Pancreas (tissue), 10 donors: ENCODE measurements at regions of chrX and their contacts with region 1.

Region 1: GRCh38 chrX:66544181-66544580 is 94.7 kb downstream of the EDA2R start:
- DNase-seq: no peak
- ATAC-seq: no peak
- H3K4me3 ChIP-seq: no peak overlapping the region
- H3K27ac ChIP-seq: no peak overlapping the region
- H3K4me1 ChIP-seq: no peaks in the 10 kb centered on the region
- H3K27me3 ChIP-seq: peaks cover 0 to 4% (median 0%) of the 10 kb centered on the region in 4 donors
- CTCF ChIP-seq: no peak

Region 2: DNA sequence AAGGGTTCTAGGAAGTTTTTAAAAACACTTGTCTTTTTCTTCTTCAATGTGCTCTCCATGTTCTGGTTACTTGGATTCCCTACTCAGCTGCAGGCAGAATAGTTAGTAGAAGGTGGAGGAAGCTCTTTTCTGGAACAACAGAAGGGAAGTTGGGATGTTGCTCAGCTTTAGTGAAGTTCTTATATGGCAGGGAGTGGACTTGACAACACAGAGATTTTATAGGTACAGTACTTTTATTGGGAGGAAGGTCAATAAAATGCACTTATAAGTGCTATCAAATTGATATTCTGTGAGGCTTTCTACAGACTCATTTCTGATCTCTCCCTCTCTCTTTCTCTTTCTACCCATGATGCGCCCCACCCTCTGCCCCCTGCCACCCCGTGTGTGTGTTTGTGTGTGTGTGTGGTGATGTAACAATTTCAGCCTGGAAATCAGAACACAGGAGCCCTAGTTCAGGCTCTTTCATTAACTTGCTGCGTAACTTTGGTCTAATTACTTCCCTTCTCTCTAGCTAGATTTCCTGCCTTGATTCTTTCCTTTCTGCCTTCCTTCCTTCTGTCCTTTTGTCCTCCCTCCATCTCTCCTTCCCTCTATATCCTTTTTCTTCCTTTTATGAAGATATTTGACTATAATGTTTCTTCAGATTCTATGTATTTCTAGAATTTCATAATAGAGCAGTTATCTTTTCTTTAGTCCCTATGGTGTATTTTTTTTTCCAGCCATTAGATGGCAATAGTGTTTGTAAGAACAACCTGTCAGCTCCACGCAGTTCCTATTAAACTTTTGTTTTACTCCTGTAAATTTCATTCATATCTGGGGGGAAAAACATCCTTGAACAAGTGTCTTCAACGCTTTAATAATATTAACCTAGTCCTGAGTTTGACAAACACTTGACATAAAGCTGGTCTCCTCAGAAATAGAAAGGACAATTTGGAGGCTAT is 343.1 kb before region 1 on chrX:
- intact Hi-C with region 1: no loop called
- DNase-seq: no peak
- ATAC-seq: no peak
- H3K4me3 ChIP-seq: no peak overlapping the region
- H3K27ac ChIP-seq: no peak overlapping the region
- H3K4me1 ChIP-seq: no peaks in the 10 kb centered on the region
- H3K27me3 ChIP-seq: peaks cover 0 to 26% (median 9%) of the 10 kb centered on the region in 4 donors
- CTCF ChIP-seq: peak in 1 of 4 donors; percentile 18

Region 3: GRCh38 chrX:66615655-66616054 is 71.5 kb after region 1 on chrX:
- intact Hi-C with region 1: loop called in 1 of 3 experiments (anchors 10 kb)
- DNase-seq: no peak
- ATAC-seq: no peak
- H3K4me3 ChIP-seq: no peak overlapping the region
- H3K27ac ChIP-seq: no peak overlapping the region
- H3K4me1 ChIP-seq: no peaks in the 10 kb centered on the region
- H3K27me3 ChIP-seq: no peaks in the 10 kb centered on the region
- CTCF ChIP-seq: no peak